Posterior cingulate gyrus (tissue), 11 donors: ENCODE measurements at regions of chr1 and their contacts with region 1.

Region 1: DNA sequence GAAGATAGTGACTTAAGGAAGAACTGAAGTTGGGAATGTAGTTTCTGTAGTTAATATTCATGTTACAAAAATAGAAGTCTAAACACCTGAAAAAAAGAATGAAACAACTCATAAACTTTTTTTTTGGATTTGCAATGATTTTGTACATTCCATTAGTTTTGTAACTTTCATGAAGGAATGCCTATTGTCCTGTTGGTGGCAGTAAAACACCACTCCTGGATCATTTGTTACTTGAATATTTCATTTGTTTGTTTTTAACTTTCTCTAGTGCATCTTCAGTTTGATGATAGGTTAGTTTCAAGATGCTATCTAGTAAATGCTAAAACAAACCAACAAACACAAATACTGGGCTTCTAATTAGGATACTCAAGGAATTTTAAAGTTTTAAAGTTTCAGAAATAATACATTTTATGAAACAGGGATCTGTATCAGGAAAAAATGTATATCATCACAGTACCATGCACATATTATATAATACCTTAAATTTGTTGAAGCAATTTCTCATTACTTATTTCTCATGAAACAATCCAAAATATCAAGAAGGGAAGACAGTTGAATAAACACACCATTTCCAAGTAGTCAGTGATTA is 229.7 kb upstream of the CACYBP start:
- DNase-seq: no peak

Region 2: GRCh38 chr1:174726167-174726879 is 43.7 kb before region 1 on chr1:
- intact Hi-C with region 1: no loop called
- DNase-seq: no peak

Region 3: DNA sequence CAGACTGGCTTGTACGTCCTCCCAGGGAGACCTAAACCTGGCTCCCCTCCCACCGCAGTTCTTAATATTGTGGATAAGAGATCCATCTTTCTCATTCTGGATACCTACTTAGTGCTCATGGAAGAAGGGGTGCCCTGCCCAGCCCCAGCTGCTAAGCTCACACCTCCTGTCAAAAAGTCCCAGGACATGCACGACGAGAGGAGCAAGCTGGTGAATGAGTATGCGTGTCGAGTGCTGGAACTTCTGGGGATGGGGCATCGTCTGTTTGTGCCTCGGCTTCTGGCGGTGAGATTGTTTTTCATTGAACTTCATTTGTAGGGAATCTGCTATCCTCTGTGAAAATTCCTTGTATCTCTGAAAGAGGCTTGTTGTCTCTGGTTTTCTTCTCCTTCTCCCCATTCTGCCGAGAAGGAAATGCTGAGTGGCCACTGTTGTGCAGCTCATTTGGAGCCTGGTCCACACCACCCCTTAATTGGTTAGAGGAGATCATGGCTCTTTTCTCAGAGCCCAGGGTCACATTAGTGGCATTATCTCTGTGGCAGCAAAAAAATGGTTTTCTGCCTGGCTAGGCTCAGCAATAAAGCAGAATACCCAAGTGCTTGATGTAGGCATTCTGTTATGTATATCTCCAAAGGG is 30.3 kb after region 1 on chr1:
- intact Hi-C with region 1: loop called (anchors 2 kb)
- DNase-seq: peak in 6 of 10 donors; percentile 12 to 84 (median 28)

Region 4: GRCh38 chr1:174839211-174839610 is 69.2 kb after region 1 on chr1:
- intact Hi-C with region 1: no loop called
- DNase-seq: no peak

Region 5: GRCh38 chr1:174982971-174983689 is 213.1 kb after region 1 on chr1:
- intact Hi-C with region 1: loop called (anchors 1 kb)
- DNase-seq: no peak

Region 6: GRCh38 chr1:174999216-174999925 is 229.3 kb after region 1 on chr1:
- intact Hi-C with region 1: loop called (anchors 2 kb)
- DNase-seq: peak; percentile 94 to 100 (median 97)

Region 7: GRCh38 chr1:175129997-175130648 is 360.1 kb after region 1 on chr1:
- intact Hi-C with region 1: loop called (anchors 10 kb)
- DNase-seq: no peak

Region 8: DNA sequence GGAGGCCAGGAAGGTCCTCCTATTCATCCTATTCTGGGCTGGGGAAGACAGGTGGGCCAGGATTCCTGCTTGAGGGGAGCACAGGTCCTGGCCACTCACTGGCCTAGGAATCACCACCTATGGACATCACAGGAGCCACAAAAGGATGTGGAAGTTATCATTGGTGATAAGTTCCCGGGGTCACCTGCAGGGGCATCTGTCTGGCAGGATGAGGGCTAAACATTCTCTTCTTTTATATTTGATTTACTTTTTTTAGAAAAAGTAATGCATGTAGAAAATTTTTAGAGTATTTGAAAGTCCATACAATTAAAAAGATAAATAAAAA is 455.7 kb after region 1 on chr1:
- intact Hi-C with region 1: no loop called
- DNase-seq: no peak